Activated B cell treated with CpG ODN at 0.5 μM for 24 hours (primary cell): ENCODE measurements at regions of chr17 and their contacts with region 1.

Region 1: GRCh38 chr17:41665566-41666236 is 23.0 kb upstream of the EIF1 start:
- DNase-seq: peak; percentile 98
- ATAC-seq: peak; percentile 75
- H3K4me3 Mint-ChIP-seq: peak overlapping the region; percentile 92
- H3K27ac Mint-ChIP-seq: peak overlapping the region; percentile 99
- H3K4me1 Mint-ChIP-seq: peaks cover 40% of the 10 kb centered on the region
- H3K27me3 Mint-ChIP-seq: no peaks in the 10 kb centered on the region
- CTCF ChIP-seq: peak; percentile 24

Region 2: DNA sequence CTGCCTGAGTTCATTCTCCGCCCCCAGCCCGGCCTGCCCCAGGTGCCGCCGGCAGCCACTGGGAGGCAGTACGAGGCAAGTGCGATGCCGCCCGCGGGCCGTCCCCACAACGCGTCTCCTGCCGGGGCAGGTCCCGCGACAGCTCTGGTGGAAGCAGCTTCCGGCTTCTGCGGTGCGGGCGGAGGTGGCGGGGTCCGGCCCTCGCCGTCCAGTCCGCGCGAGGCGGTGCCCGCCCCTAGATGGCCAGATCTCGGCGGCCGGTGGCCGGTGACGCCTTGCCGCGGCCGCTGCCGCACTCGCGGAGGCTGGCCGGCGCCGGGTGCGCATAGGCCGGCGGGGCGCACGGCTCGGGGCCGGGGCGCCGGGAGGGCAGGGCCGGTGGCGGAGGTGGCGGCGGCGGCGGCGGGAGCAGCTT is 1303.0 kb before region 1 on chr17:
- CTCF ChIA-PET with region 1: no interaction called
- POLR2A ChIA-PET with region 1: interaction called, 4 read pairs
- intact Hi-C with region 1: loop called (anchors 1 kb)
- DNase-seq: peak; percentile 73
- ATAC-seq: peak; percentile 85
- H3K4me3 Mint-ChIP-seq: peak overlapping the region; percentile 58
- H3K27ac Mint-ChIP-seq: peak overlapping the region; percentile 67
- H3K4me1 Mint-ChIP-seq: peaks cover 17% of the 10 kb centered on the region
- H3K27me3 Mint-ChIP-seq: peaks cover 14% of the 10 kb centered on the region
- CTCF ChIP-seq: no peak

Region 3: DNA sequence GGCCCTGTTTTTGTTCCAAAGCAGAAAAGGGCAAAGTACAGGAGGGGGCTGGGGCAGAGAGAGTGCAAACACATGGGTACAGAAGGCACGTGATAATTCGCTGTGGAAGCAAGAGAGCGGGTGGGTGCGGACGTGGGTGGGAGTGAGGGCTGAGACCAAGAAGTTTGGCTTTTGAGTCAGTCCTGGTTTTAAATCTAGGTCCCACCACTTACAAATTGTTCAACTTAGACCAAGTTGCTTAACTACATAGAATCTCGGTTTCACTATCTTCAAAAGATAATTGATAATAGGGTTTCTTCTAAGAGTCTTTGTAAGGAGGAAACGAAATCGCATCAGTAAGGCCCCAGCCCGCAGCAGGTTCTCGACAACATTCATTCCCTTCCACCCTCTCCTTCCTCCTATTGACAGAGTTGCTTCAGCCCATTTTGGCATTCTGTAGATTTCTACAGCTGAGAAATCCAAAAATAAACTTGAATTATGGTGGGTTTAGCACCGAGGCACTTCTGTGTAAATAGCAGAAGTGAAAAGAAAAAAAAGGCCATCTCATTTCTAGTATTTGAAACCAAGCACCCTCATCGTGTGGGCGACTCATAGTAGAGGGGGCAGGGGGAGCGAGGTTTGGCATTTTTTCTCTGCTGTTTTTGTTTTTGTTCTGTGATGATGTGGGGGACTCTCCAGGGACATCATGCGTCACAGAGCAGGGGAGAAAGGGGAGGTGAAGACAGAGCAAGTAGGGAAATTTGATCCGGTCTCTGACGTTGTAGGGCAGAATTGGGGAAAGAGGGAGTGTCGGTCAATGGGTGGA is 1066.8 kb before region 1 on chr17:
- CTCF ChIA-PET with region 1: no interaction called
- POLR2A ChIA-PET with region 1: no interaction called
- intact Hi-C with region 1: loop called (anchors 2 kb)
- DNase-seq: peak; percentile 70
- ATAC-seq: peak; percentile 75
- H3K4me3 Mint-ChIP-seq: peak overlapping the region; percentile 59
- H3K27ac Mint-ChIP-seq: peak overlapping the region; percentile 92
- H3K4me1 Mint-ChIP-seq: peaks cover 95% of the 10 kb centered on the region
- H3K27me3 Mint-ChIP-seq: no peaks in the 10 kb centered on the region
- CTCF ChIP-seq: no peak

Region 4: DNA sequence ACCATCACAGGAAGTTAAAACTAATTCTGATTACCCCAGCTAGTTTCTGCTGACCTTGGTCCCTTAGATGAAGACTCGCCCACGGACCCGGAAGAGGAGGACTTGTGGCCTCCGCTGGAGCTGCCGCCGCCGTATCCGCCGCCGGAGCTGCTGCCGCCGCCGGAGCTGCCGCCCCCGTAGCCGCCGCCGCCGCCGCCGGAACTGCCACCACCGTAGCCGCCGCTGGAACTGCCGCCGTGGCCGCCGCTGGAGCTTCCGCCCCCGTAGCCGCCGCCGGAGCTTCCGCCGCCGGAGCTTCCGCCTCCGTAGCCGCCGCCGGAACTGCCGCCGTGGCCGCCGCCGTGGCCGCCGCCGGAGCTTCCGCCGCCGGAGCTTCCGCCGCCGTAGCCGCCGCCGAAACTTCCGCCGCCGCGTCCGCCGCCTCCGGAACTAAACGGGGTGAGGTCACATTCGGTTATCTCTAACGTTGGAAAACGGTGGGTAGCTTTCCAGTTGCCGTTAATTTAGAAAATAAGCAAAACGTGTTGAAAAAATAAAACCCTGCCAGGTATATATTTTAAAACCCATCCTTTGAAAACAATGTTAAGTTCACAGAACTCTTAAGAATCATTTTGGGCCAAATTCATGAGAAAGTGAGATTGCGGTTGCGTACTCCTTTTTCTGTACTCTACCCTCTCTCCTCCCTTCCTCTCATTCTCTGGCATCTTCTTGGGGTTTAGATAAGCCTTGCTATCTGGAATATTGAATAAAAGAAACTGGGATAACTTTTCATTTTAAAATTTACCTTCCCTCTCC is 846.8 kb before region 1 on chr17:
- CTCF ChIA-PET with region 1: interaction called, 5 read pairs
- POLR2A ChIA-PET with region 1: interaction called, 8 read pairs
- intact Hi-C with region 1: loop called (anchors 5 kb)
- DNase-seq: peak; percentile 79
- ATAC-seq: peak; percentile 89
- H3K4me3 Mint-ChIP-seq: peak overlapping the region; percentile 87
- H3K27ac Mint-ChIP-seq: peak overlapping the region; percentile 83
- H3K4me1 Mint-ChIP-seq: peaks cover 10% of the 10 kb centered on the region
- H3K27me3 Mint-ChIP-seq: peaks cover 14% of the 10 kb centered on the region
- CTCF ChIP-seq: no peak

Region 5: DNA sequence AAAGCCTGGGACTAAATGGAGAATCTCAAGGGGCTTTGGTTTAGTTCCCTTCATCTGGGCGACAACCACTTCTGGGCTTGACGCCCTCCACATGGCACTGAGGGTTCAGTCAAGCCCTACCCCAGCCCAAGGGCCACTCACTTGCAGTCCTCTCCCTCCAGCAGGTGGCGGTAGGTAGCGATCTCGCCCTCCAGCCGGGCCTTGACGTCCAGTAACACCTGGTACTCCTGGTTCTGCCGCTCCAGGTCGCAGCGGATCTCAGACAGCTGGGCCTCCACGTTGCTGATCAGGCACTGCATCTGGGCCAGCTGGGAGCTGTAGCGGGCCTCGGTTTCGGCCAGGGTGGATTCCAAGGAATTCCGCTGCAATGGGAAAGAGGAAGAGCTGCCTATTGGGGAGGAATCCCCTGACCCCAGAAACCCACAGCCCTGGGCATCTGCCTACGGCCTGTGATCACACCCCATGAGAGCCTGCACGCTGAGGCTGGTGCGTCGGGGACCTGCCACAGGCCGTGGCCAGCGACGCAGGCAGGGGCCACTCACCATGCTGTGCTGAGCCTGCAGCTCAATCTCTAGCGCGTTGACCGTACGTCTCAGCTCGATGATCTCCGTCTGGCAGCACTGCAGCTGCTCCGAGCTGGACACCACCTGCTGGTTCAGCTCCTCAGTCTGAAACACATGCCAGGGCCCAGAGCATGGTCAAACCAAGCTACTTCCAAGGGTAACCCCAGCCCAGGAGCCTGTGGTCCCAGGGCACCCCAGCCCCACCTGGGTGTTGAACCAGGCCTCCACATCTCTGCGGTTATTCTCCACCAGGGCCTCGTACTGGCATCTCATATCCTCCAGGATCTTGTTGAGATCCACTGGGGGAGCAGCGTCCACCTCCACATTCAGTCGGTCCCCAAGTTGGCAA is 178.6 kb before region 1 on chr17:
- CTCF ChIA-PET with region 1: interaction called, 3 read pairs
- POLR2A ChIA-PET with region 1: no interaction called
- intact Hi-C with region 1: loop called (anchors 2 kb)
- DNase-seq: no peak
- ATAC-seq: no peak
- H3K4me3 Mint-ChIP-seq: no peak overlapping the region
- H3K27ac Mint-ChIP-seq: no peak overlapping the region
- H3K4me1 Mint-ChIP-seq: no peaks in the 10 kb centered on the region
- H3K27me3 Mint-ChIP-seq: peaks cover 14% of the 10 kb centered on the region
- CTCF ChIP-seq: no peak

Region 6: DNA sequence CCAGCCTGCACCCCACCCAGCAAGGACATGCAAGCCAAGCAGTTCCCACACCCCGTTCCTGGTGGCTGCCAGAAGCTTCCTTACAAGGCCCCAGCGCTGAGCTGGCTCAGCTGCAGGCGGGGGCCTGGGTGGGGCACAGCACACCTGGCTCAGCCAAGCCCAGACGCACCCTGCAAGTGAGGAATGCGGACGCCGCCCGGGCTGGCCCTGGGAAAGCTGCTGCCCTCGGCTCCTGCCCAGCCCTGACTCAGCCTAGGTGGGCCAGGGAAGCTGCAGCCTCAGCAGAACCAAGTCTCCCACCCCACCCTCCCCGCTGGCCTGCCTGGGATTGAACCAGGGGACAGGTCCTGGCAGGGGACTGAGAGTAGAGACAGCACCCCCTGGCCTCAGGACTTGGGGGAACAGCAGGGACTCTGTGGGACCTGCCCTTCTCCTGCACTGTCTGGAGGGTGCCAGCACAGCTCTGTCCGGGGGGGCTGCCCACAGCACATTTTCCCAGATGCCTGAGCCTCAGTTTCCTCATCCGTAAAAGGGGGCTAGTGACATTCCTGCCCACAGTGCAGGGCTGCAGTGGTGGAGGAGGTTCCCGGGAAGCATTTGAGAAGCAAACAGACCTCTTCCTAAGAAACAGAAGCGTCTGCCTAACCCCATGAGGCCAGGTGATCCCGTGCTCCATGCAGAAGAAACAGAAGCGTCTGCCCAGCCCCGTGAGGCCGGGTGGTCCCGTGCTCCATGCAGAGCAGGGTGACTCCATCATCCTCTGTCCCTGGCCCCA is 11.4 kb before region 1 on chr17:
- CTCF ChIA-PET with region 1: interaction called, 150 read pairs
- POLR2A ChIA-PET with region 1: interaction called, 34 read pairs
- intact Hi-C with region 1: no loop called
- DNase-seq: no peak
- ATAC-seq: no peak
- H3K4me3 Mint-ChIP-seq: no peak overlapping the region
- H3K27ac Mint-ChIP-seq: no peak overlapping the region
- H3K4me1 Mint-ChIP-seq: no peaks in the 10 kb centered on the region
- H3K27me3 Mint-ChIP-seq: peaks cover 3% of the 10 kb centered on the region
- CTCF ChIP-seq: no peak

Region 7: DNA sequence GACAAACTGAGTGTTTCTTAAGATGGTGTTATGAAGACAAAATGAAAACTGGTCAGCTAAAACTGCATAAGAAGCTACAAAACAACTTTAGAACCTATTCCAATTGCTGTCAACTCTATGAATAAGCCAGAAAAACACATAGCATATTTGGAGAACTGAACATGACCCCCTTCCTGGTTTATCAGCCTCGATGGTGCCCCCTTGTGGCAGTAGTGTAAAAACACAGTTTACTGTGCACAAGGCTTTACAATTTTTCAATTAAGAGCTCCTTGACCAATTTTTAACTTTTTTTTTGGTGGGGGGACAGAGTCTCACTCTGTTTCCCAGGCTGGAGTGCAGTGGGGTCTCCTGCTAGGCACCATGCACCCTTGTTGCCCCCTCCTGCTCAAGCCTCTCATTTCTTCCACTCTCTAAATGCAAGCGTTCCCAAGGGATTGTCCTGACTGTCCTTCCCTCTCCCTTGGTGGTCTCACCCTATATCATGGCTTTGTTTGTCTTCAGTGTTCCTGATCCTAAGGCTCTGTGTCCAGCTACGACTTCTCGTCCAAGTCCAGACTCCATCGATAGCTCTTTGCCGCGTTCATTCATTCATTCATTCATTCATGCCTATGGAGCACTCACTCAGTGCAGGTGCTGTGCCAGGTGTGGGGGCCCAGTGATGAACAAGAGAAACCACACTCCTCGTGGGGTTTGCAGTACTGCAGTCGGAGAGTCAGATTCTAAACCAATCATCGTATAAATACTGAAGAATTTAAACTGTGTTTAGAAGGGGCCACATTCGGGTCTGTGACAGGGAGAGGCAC is 30.5 kb after region 1 on chr17:
- CTCF ChIA-PET with region 1: interaction called, 72 read pairs
- POLR2A ChIA-PET with region 1: interaction called, 272 read pairs
- intact Hi-C with region 1: no loop called
- DNase-seq: no peak
- ATAC-seq: peak; percentile 75
- H3K4me3 Mint-ChIP-seq: no peak overlapping the region
- H3K27ac Mint-ChIP-seq: peak overlapping the region; percentile 65
- H3K4me1 Mint-ChIP-seq: peaks cover 26% of the 10 kb centered on the region
- H3K27me3 Mint-ChIP-seq: no peaks in the 10 kb centered on the region
- CTCF ChIP-seq: peak; percentile 57